Left ventricle myocardium superior (tissue), 1 donor: ENCODE measurements at regions of chr15 and their contacts with region 1.

Region 1: GRCh38 chr15:76139368-76140073 is 79.7 kb downstream of the TMEM266 start:
- DNase-seq: peak; percentile 64
- ATAC-seq: peak; percentile 88

Region 2: GRCh38 chr15:76059320-76060117 is 80.0 kb before region 1 on chr15 and contains the start of gene TMEM266:
- intact Hi-C with region 1: loop called (anchors 5 kb)
- DNase-seq: peak; percentile 61
- ATAC-seq: peak; percentile 86
- total RNA-seq, gene TMEM266: 0.10 TPM

Region 3: GRCh38 chr15:76208786-76209424 is 69.4 kb after region 1 on chr15:
- intact Hi-C with region 1: no loop called
- DNase-seq: no peak
- ATAC-seq: no peak